ENCODE measurements at regions of chr17 and their contacts with region 1.

Region 1: GRCh38 chr17:30336369-30337171 is 2.7 kb upstream of the TMIGD1 start:
- DNase-seq: peak; percentile 33
- CTCF ChIP-seq: peak; percentile 56

Region 2: GRCh38 chr17:29972277-29972676 is 364.3 kb before region 1 on chr17:
- CTCF ChIA-PET with region 1: no interaction called
- POLR2A ChIA-PET with region 1: no interaction called
- DNase-seq: no peak
- CTCF ChIP-seq: no peak

Region 3: GRCh38 chr17:30093463-30094147 is 243.0 kb before region 1 on chr17:
- CTCF ChIA-PET with region 1: interaction called, 12 read pairs
- POLR2A ChIA-PET with region 1: interaction called, 3 read pairs
- DNase-seq: peak; percentile 72
- CTCF ChIP-seq: peak; percentile 79

Region 4: DNA sequence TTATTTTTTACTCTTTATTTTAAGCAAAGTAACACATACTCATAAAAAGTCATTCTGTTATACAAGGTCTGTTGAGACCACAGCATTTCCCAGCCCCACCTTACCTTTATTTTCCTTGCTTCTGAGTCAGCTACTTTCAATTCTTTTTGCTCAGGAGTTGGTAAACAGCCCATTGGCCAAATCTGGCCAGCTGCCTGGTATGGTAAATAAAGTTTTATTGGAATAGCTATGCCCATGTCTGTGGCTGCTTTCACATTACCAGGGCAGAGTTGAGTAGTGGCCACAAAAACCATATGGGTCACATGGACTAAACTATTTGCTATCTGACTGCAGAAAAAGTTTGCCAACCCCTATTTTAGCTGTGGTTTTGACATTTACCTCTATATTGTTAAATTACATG is 223.4 kb before region 1 on chr17:
- CTCF ChIA-PET with region 1: interaction called, 158 read pairs
- POLR2A ChIA-PET with region 1: no interaction called
- DNase-seq: no peak
- CTCF ChIP-seq: no peak

Region 5: DNA sequence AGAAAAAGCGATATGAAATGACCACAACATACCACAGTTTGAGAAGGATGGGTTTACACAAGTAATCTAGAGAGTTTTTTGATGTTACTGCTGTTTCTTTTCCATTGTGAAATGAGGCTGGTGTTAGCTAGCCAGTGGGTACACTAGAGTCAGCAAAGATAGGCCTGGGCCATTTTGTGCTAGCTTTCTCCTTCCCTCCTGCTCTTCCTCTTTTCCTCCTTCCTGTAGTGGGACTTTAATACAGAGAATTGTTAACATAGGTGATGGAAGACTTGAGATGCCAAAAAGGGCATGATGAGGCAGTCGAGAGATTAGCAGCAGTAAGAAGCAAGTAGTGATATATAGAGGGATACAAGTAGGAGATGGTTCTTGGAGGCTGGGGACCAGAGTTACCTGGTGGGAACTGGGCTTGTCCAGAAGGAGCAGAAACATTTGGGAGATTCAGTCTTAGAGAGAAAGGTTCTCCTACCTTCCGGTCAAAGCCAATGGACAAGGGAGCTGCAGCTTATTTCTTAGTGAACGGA is 212.2 kb before region 1 on chr17:
- CTCF ChIA-PET with region 1: interaction called, 48 read pairs
- POLR2A ChIA-PET with region 1: no interaction called
- DNase-seq: no peak
- CTCF ChIP-seq: no peak

Region 6: GRCh38 chr17:30291543-30292285 is 44.9 kb before region 1 on chr17 and contains the start of gene BLMH:
- CTCF ChIA-PET with region 1: interaction called, 10 read pairs
- POLR2A ChIA-PET with region 1: no interaction called
- DNase-seq: peak; percentile 95
- CTCF ChIP-seq: no peak

Region 7: GRCh38 chr17:30323895-30324319 is 12.7 kb before region 1 on chr17:
- CTCF ChIA-PET with region 1: interaction called, 51 read pairs
- POLR2A ChIA-PET with region 1: no interaction called
- DNase-seq: peak; percentile 31
- CTCF ChIP-seq: no peak

Region 8: GRCh38 chr17:30546448-30546847 is 209.9 kb after region 1 on chr17:
- CTCF ChIA-PET with region 1: no interaction called
- POLR2A ChIA-PET with region 1: no interaction called
- DNase-seq: no peak
- CTCF ChIP-seq: no peak

Region 9: GRCh38 chr17:30677550-30678249 is 341.1 kb after region 1 on chr17:
- CTCF ChIA-PET with region 1: no interaction called
- POLR2A ChIA-PET with region 1: no interaction called
- DNase-seq: no peak
- CTCF ChIP-seq: no peak

Measured in GM10248 (cell line).